OCI-LY7 (cell line): ENCODE measurements at regions of chr21 and their contacts with region 1.

Region 1: GRCh38 chr21:36297921-36298594 is 21.9 kb upstream of the MORC3 start:
- DNase-seq: peak; percentile 92
- H3K4me3 ChIP-seq: peak overlapping the region; percentile 60
- H3K27ac ChIP-seq: peak overlapping the region; percentile 77
- H3K4me1 ChIP-seq: peaks cover 38% of the 10 kb centered on the region
- CTCF ChIP-seq: no peak

Region 2: DNA sequence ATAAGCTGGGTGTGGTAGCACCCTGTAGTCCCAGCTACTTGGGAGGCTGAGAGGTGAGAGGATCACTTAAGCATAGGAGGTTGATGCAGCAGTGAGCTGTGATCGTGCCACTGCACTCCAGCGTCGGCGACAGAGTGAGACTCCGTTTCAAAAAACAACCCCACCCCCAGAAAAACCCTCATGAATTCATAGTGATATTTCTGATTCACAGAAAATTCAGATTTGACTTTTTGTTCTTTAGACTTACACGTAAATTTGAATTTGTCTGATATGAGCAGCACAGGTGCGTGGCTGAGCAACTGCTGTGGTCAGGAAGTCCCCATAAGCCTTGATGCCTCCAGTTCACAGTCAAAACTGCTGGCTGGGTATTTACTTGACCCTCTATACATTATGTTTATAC is 12.0 kb after region 1 on chr21:
- CTCF ChIA-PET with region 1: no interaction called
- POLR2A ChIA-PET with region 1: interaction called, 73 read pairs
- intact Hi-C with region 1: no loop called
- DNase-seq: peak; percentile 78
- H3K4me3 ChIP-seq: peak overlapping the region; percentile 25
- H3K27ac ChIP-seq: peak overlapping the region; percentile 63
- H3K4me1 ChIP-seq: peaks cover 16% of the 10 kb centered on the region
- CTCF ChIP-seq: no peak